BJ (cell line): ENCODE measurements at regions of chr12 and their contacts with region 1.

Region 1: DNA sequence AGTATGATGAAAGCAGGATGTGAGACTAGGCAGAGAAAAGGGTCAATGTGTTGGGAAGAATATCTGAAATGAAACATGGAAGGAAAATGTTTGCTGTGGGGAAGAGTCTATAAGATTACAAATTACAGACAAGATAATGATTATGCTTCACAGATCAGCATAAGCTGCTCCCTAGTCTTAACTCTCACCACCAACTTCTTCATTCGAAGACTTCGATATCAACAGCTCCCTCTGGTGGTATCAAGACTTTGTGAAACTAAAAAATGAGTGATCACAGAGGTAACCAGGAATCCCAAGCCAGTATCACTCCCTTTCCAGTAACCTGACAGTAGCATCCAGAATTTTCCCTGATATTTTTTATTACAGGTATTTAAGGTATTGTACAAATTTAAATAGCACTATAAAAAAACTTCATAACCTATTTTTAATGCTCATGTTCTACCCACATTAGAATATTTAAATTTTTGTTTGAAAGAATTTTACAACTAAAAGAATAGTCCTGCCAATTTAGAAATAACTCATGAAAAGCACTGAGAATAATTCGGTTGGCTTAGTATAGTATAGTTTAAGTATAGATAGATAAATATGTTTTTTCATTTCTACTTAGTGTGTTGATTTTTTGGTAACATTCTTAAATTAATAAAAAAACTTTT is 84.4 kb downstream of the C2CD5 start:
- DNase-seq: no peak
- H3K4me3 ChIP-seq: no peak overlapping the region
- H3K27me3 ChIP-seq: no peaks in the 10 kb centered on the region
- CTCF ChIP-seq: peak; percentile 70

Region 2: DNA sequence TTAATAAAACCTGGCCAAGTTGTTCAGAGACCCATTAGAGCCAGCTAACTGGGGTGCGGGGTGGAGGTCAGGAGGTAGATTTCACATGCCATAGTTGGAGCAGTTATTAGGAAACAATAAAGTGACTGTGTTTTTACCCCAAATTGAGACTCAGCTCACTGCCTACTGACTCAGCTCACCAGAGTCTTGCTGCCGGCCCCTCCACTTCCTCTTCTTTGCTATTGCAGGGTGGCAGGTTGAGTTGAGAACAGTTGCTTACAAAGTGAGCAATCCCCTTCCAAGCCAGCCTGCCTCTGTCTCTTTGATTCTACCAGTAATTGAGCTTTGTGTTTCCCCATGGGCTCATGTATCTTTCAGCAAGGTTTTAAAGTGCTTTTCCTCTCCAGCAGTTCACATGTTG is 138.3 kb before region 1 on chr12:
- CTCF ChIA-PET with region 1: no interaction called
- POLR2A ChIA-PET with region 1: no interaction called
- DNase-seq: no peak
- H3K4me3 ChIP-seq: no peak overlapping the region
- H3K27me3 ChIP-seq: no peaks in the 10 kb centered on the region
- CTCF ChIP-seq: no peak

Region 3: GRCh38 chr12:22443379-22444316 is 16.3 kb before region 1 on chr12:
- CTCF ChIA-PET with region 1: interaction called, 44 read pairs
- POLR2A ChIA-PET with region 1: no interaction called
- DNase-seq: no peak
- H3K4me3 ChIP-seq: no peak overlapping the region
- H3K27me3 ChIP-seq: no peaks in the 10 kb centered on the region
- CTCF ChIP-seq: peak; percentile 76

Region 4: DNA sequence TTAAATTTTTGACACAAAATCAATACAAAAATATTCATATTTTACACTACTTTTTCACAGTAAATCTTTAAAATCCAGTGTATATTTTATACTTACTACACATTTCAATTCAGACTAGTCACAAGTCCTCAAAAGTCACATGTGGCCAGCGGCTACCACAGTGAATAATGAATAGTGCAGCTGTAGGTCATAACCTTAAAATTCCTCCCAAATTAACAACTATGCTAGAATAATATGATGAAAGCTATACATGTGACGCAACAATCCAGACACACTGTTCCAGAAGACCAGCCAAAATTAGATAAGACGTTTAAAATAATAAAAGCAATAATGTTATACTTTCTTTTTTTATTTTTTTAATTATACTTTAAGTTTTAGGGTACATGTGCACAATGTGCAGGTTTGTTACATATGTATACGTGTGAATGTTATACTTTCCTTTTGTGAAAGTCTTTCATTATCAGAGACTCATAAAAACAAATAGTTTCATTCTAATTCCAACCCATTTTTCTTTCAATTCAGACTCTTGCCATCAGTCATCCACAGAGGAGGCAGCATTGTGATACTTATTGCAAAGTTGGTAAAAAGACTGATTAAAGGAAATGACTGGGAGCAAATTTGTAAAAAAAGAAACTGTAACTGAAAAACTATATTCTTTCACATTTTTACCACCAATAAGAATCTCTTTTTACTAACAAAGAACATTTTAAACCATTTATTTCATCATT is 17.4 kb after region 1 on chr12:
- CTCF ChIA-PET with region 1: interaction called, 25 read pairs
- POLR2A ChIA-PET with region 1: no interaction called
- DNase-seq: peak; percentile 41
- H3K4me3 ChIP-seq: no peak overlapping the region
- H3K27me3 ChIP-seq: no peaks in the 10 kb centered on the region
- CTCF ChIP-seq: no peak